ENCODE measurements at regions of chr5 and their contacts with region 1.

Region 1: GRCh38 chr5:94508461-94509148 is 109.8 kb downstream of the KIAA0825 start:
- DNase-seq: no peak
- ATAC-seq: no peak
- H3K4me3 ChIP-seq: no peak overlapping the region
- H3K27ac ChIP-seq: no peak overlapping the region
- H3K4me1 ChIP-seq: no peaks in the 10 kb centered on the region
- H3K27me3 ChIP-seq: no peaks in the 10 kb centered on the region
- CTCF ChIP-seq: no peak

Region 2: GRCh38 chr5:94485067-94485466 is 23.5 kb before region 1 on chr5:
- CTCF ChIA-PET with region 1: interaction called, 14 read pairs
- POLR2A ChIA-PET with region 1: no interaction called
- in situ Hi-C with region 1: no loop called
- intact Hi-C with region 1: no loop called
- DNase-seq: no peak
- ATAC-seq: no peak
- H3K4me3 ChIP-seq: no peak overlapping the region
- H3K27ac ChIP-seq: no peak overlapping the region
- H3K4me1 ChIP-seq: no peaks in the 10 kb centered on the region
- H3K27me3 ChIP-seq: no peaks in the 10 kb centered on the region; the same call in 1 of the 2 replicates
- CTCF ChIP-seq: no peak

Measured in Panc1 (cell line).